ENCODE measurements at regions of chr2 and their contacts with region 1.

Region 1: GRCh38 chr2:171922230-171923022 is at the start of gene HAT1:
- DNase-seq: peak; percentile 97 to 98 (median 98)
- ATAC-seq: peak; percentile 100
- H3K4me3 ChIP-seq: peak within 1 kb of the TSS; percentile 62 to 99 (median 84)
- H3K27ac ChIP-seq: peak within 1 kb of the TSS; percentile 72 to 97 (median 90)
- H3K4me1 ChIP-seq: peaks cover 6 to 33% (median 19%) of the 10 kb centered on the region in 12 donors
- H3K27me3 ChIP-seq: no peaks in the 10 kb centered on the region
- CTCF ChIP-seq: no peak
- POLR2A ChIP-seq: peak in 1 of 2 donors; percentile 76
- total RNA-seq, gene HAT1: 22.2 to 43.1 (median 34.1) TPM

Region 2: GRCh38 chr2:171687287-171688128 is 234.9 kb before region 1 on chr2 and contains the start of gene DYNC1I2:
- intact Hi-C with region 1: loop called in 1 of 10 experiments (anchors 2 kb)
- DNase-seq: peak; percentile 91 to 95 (median 93)
- ATAC-seq: peak; percentile 98 to 99 (median 98)
- H3K4me3 ChIP-seq: peak within 1 kb of the TSS; percentile 64 to 92 (median 87)
- H3K27ac ChIP-seq: peak within 1 kb of the TSS; percentile 66 to 96 (median 90)
- H3K4me1 ChIP-seq: peaks cover 0 to 35% (median 15%) of the 10 kb centered on the region in 12 donors
- H3K27me3 ChIP-seq: peaks cover 0 to 2% (median 0%) of the 10 kb centered on the region in 9 donors
- CTCF ChIP-seq: no peak
- POLR2A ChIP-seq: no peak
- total RNA-seq, gene DYNC1I2: 66.7 to 92.9 (median 74.0) TPM

Region 3: DNA sequence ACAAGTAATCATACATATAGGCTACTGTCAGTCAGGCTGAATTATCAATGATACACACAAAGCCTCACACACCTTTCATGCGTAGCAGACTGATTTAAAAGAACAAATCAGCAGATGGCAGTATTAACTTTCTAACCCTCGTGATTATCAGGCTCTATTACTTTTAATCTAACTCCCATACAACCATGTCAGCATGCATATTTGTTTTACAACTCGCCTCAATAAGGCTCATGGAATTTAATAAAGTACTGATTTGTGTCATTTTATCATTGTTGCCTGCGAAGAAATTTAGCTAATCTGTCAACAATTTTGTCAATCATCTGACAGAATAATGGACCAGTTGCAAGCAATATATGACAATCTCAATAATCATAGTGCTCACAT is 111.2 kb before region 1 on chr2:
- intact Hi-C with region 1: loop called in 1 of 10 experiments (anchors 10 kb)
- DNase-seq: no peak
- ATAC-seq: peak in 2 of 4 donors; percentile 22 to 28
- H3K4me3 ChIP-seq: no peak overlapping the region
- H3K27ac ChIP-seq: no peak overlapping the region
- H3K4me1 ChIP-seq: peaks cover 0 to 14% (median 0%) of the 10 kb centered on the region in 12 donors
- H3K27me3 ChIP-seq: no peaks in the 10 kb centered on the region
- CTCF ChIP-seq: peak in 9 of 12 donors; percentile 16 to 54 (median 41)
- POLR2A ChIP-seq: no peak

Region 4: GRCh38 chr2:171893824-171894611 is 28.4 kb before region 1 on chr2 and contains the start of gene SLC25A12:
- intact Hi-C with region 1: loop called in 4 of 10 experiments (anchors 1 to 2 kb)
- DNase-seq: peak; percentile 86 to 92 (median 88)
- ATAC-seq: peak; percentile 93 to 99 (median 98)
- H3K4me3 ChIP-seq: peak within 1 kb of the TSS; percentile 75 to 98 (median 86)
- H3K27ac ChIP-seq: peak within 1 kb of the TSS; percentile 39 to 94 (median 84)
- H3K4me1 ChIP-seq: peaks cover 0 to 42% (median 19%) of the 10 kb centered on the region in 12 donors
- H3K27me3 ChIP-seq: no peaks in the 10 kb centered on the region
- CTCF ChIP-seq: no peak
- POLR2A ChIP-seq: peak in 1 of 2 donors; percentile 84
- total RNA-seq, gene SLC25A12: 74.8 to 128 (median 120) TPM

Region 5: GRCh38 chr2:172084734-172085459 is 162.5 kb after region 1 on chr2:
- intact Hi-C with region 1: loop called in 2 of 10 experiments (anchors 10 kb)
- DNase-seq: peak; percentile 72 to 87 (median 73)
- ATAC-seq: peak; percentile 49 to 97 (median 90)
- H3K4me3 ChIP-seq: peak overlapping the region; percentile 20 to 63 (median 46)
- H3K27ac ChIP-seq: no peak overlapping the region
- H3K4me1 ChIP-seq: peaks cover 3 to 62% (median 26%) of the 10 kb centered on the region in 12 donors
- H3K27me3 ChIP-seq: peaks cover 91 to 100% (median 100%) of the 10 kb centered on the region in 9 donors
- CTCF ChIP-seq: no peak
- POLR2A ChIP-seq: no peak

Measured in heart left ventricle (tissue), 16 donors.